OCI-LY7 (cell line): ENCODE measurements at regions of chr1 and their contacts with region 1.

Region 1: GRCh38 chr1:165856606-165857005 is 29.2 kb downstream of the UCK2 start:
- DNase-seq: no peak
- H3K4me3 ChIP-seq: no peak overlapping the region
- H3K27ac ChIP-seq: no peak overlapping the region
- H3K4me1 ChIP-seq: no peaks in the 10 kb centered on the region
- CTCF ChIP-seq: no peak

Region 2: DNA sequence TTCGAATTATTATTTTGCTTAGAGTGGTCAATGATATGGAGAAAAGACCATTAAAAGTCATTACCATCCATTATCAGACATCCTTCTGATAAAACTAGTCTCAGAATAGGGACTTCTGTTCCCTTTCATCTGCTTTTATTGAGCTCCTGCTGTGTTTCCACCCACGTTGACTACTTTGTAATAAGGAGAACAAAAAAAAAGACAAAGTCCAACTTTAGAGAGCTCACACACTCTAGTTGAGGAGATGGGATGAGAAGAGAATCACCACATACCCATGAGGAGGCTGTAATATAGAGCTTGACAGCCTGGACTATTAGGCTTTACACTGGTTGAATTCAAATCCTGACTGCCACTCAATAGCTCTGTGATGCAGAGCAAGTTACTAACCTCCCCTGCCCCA is 130.4 kb before region 1 on chr1:
- CTCF ChIA-PET with region 1: no interaction called
- POLR2A ChIA-PET with region 1: no interaction called
- intact Hi-C with region 1: no loop called
- DNase-seq: no peak
- H3K4me3 ChIP-seq: no peak overlapping the region
- H3K27ac ChIP-seq: no peak overlapping the region
- H3K4me1 ChIP-seq: no peaks in the 10 kb centered on the region
- CTCF ChIP-seq: no peak

Region 3: GRCh38 chr1:165842671-165843129 is 13.9 kb before region 1 on chr1:
- CTCF ChIA-PET with region 1: no interaction called
- POLR2A ChIA-PET with region 1: interaction called, 10 read pairs
- intact Hi-C with region 1: no loop called
- DNase-seq: peak; percentile 63
- H3K4me3 ChIP-seq: no peak overlapping the region
- H3K27ac ChIP-seq: no peak overlapping the region
- H3K4me1 ChIP-seq: peaks cover 25% of the 10 kb centered on the region
- CTCF ChIP-seq: no peak